ENCODE measurements at regions of chr7 and their contacts with region 1.

Region 1: GRCh38 chr7:27364344-27365100 is 121.9 kb downstream of the EVX1 start:
- DNase-seq: peak; percentile 9
- H3K4me3 ChIP-seq: no peak overlapping the region
- H3K27ac ChIP-seq: no peak overlapping the region
- H3K4me1 ChIP-seq: no peaks in the 10 kb centered on the region
- H3K27me3 ChIP-seq: no peaks in the 10 kb centered on the region
- CTCF ChIP-seq: no peak

Region 2: DNA sequence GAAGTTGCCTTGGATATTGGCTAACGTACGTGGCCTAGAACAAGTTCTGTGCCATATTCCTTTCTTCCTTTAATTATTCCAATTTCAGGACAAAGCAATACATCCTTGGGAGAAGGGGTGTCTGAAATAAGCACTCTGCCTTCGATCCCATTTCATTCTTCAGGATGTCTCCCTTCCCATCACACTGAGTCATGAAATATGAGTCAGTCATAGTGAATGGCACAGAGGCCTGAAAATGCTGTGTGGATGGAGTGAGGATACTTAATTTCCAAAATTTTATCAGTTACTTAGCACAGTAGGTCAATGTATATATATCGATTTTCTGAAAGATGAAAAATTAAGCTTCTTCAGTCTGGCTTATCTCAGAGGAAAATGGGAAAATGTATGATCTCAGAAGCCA is 102.4 kb before region 1 on chr7:
- CTCF ChIA-PET with region 1: interaction called, 11 read pairs
- dilution Hi-C with region 1: no loop called
- in situ Hi-C with region 1: no loop called
- intact Hi-C with region 1: no loop called
- DNase-seq: no peak
- H3K4me3 ChIP-seq: no peak overlapping the region
- H3K27ac ChIP-seq: no peak overlapping the region
- H3K4me1 ChIP-seq: no peaks in the 10 kb centered on the region
- H3K27me3 ChIP-seq: no peaks in the 10 kb centered on the region
- CTCF ChIP-seq: no peak

Region 3: GRCh38 chr7:27339478-27339877 is 25.0 kb before region 1 on chr7:
- CTCF ChIA-PET with region 1: no interaction called
- dilution Hi-C with region 1: no loop called
- in situ Hi-C with region 1: no loop called
- intact Hi-C with region 1: no loop called
- DNase-seq: no peak
- H3K4me3 ChIP-seq: no peak overlapping the region
- H3K27ac ChIP-seq: no peak overlapping the region
- H3K4me1 ChIP-seq: no peaks in the 10 kb centered on the region
- H3K27me3 ChIP-seq: no peaks in the 10 kb centered on the region
- CTCF ChIP-seq: no peak

Measured in mammary epithelial cell (primary cell).